AG04449 (cell line): ENCODE measurements at regions of chr13 and their contacts with region 1.

Region 1: DNA sequence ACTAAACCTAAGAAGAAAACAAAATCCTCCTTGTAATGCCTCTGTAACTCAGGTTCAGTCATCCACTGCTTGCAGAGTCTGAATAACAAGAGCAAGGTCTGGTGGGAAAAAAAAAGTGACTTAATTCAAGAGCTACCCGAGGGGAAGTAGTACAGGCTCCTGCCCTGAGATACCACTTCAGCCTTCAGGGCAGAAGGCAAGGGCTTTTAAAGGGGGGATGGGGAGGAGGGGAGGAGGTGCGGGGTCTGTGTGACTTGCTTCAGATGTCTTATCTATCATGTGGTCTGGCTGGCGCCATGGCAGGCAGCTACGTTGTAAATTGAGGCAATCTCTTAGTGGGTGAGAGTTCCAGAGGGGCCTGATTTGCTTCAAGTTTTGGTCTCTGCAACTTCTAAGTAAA is 66.7 kb downstream of the LRRC63 start:
- DNase-seq: no peak
- H3K4me3 ChIP-seq: no peak overlapping the region
- CTCF ChIP-seq: no peak

Region 2: DNA sequence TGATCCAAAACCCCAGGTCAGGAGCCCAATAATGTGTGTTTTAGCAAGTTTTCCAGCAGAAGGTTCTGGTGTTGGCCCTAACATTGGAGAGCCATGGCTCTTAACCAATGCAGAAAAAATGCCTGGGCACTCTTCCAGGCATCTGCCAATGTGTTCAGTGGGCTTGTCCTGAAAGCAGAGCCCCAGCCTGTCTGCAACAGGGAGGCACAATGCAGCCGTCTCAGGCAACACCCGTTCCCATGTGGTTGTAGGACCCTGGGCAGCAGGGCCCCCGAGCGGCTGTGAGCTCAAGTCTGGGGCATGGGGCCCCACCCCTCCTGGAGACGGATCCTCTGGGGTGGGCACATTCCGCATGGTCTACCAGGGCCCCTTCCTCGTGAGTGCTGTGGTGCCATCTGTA is 368.8 kb before region 1 on chr13:
- CTCF ChIA-PET with region 1: no interaction called
- POLR2A ChIA-PET with region 1: no interaction called
- DNase-seq: no peak
- H3K4me3 ChIP-seq: no peak overlapping the region
- CTCF ChIP-seq: no peak

Region 3: DNA sequence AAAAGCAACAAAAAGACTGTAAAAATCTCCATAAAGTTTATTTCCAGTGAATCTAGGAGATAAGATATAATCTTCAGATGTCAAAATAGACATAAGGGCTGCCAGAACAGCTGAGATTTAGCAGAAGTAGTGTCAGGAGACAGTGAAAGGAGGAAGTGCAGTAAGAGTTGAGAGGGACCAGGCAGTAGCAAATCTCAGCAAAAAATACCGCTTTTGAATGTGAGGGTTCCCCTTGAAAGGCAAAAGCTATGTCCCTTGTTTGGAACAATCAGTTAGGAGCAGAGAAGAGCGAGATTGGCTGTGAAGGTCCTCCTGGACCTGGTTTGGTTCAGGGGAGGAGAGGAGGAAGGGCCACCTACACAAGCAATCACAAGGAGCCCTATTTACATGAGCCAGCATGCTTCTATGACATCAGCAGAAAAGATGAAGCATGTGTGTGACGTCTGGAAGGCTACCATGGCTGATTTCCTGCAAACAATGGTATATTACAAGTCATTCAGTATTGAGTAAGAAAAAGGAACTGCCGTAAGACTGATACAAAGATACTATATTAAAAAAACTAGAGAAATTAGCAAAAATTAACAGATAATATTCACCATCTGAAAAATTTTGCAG is 328.0 kb before region 1 on chr13:
- CTCF ChIA-PET with region 1: no interaction called
- POLR2A ChIA-PET with region 1: no interaction called
- DNase-seq: no peak
- H3K4me3 ChIP-seq: no peak overlapping the region
- CTCF ChIP-seq: no peak

Region 4: GRCh38 chr13:46288570-46289259 is 10.2 kb after region 1 on chr13:
- CTCF ChIA-PET with region 1: interaction called, 69 read pairs
- POLR2A ChIA-PET with region 1: no interaction called
- DNase-seq: no peak
- H3K4me3 ChIP-seq: no peak overlapping the region
- CTCF ChIP-seq: peak; percentile 70

Region 5: DNA sequence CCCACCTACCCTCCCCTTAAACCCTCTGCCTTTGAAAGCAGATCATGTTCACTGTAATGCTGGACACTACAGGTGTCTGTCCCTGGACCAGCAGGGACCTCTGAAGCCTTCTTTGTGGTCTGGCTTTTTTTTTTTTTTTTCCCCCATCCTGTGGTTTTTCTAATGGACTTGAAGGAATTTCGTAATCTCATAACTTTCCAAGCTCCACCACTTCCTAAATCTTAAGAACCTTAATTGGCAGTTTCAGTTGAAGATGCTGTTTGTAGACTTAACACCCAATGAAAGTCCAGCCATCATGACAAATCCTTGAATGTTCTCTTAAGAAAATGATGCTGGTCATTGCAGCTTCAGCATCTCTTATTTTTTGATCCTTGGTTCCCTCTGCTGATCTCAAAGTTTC is 229.5 kb after region 1 on chr13:
- CTCF ChIA-PET with region 1: no interaction called
- POLR2A ChIA-PET with region 1: no interaction called
- DNase-seq: no peak
- H3K4me3 ChIP-seq: no peak overlapping the region
- CTCF ChIP-seq: no peak